A673 (cell line): ENCODE measurements at regions of chr9 and their contacts with region 1.

Region 1: GRCh38 chr9:9631284-9631683 is 981.5 kb downstream of the PTPRD start:
- DNase-seq: no peak
- H3K4me3 ChIP-seq: no peak overlapping the region
- H3K27ac ChIP-seq: no peak overlapping the region
- H3K4me1 ChIP-seq: no peaks in the 10 kb centered on the region
- H3K27me3 ChIP-seq: no peaks in the 10 kb centered on the region
- CTCF ChIP-seq: no peak

Region 2: DNA sequence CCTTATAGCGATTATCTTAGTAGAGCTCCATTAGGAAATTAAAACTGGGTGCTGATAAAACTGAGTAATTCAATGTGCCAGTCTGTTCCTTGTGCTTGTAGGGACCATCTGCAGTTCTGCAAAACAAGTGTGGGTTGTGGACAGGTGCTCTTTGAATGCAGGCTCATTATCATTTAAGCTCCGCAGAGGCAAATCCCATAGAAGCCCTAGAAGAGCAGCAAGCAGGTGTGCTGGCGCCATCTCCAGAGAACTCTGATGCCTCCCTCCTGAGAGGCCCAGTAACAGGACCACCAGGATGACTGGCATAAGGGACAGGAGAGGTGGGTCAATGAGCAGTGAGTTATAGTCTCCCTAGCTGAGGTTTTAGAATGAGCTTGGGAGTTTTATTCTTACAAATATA is 489.3 kb before region 1 on chr9:
- CTCF ChIA-PET with region 1: no interaction called
- POLR2A ChIA-PET with region 1: no interaction called
- intact Hi-C with region 1: no loop called
- DNase-seq: no peak
- H3K4me3 ChIP-seq: no peak overlapping the region
- H3K27ac ChIP-seq: no peak overlapping the region
- H3K4me1 ChIP-seq: no peaks in the 10 kb centered on the region
- H3K27me3 ChIP-seq: no peaks in the 10 kb centered on the region
- CTCF ChIP-seq: no peak

Region 3: GRCh38 chr9:9645006-9645405 is 13.7 kb after region 1 on chr9:
- CTCF ChIA-PET with region 1: no interaction called
- POLR2A ChIA-PET with region 1: no interaction called
- intact Hi-C with region 1: loop called (anchors 2 kb)
- DNase-seq: no peak
- H3K4me3 ChIP-seq: no peak overlapping the region
- H3K27ac ChIP-seq: no peak overlapping the region
- H3K4me1 ChIP-seq: no peaks in the 10 kb centered on the region
- H3K27me3 ChIP-seq: no peaks in the 10 kb centered on the region
- CTCF ChIP-seq: no peak